ENCODE measurements at regions of chr10 and their contacts with region 1.

Region 1: GRCh38 chr10:61284222-61284890 is 168.8 kb downstream of the TMEM26 start:
- DNase-seq: peak; percentile 64
- ATAC-seq: no peak
- H3K4me3 ChIP-seq: peak overlapping the region; percentile 15 to 30; a peak in 3 of 4 replicates
- H3K27ac ChIP-seq: peak overlapping the region; percentile 48; the same call in 1 of the 2 replicates
- H3K4me1 ChIP-seq: no peaks in the 10 kb centered on the region
- H3K27me3 ChIP-seq: no peaks in the 10 kb centered on the region
- CTCF ChIP-seq: peak; percentile 80; the same call in 1 of the 2 replicates

Region 2: DNA sequence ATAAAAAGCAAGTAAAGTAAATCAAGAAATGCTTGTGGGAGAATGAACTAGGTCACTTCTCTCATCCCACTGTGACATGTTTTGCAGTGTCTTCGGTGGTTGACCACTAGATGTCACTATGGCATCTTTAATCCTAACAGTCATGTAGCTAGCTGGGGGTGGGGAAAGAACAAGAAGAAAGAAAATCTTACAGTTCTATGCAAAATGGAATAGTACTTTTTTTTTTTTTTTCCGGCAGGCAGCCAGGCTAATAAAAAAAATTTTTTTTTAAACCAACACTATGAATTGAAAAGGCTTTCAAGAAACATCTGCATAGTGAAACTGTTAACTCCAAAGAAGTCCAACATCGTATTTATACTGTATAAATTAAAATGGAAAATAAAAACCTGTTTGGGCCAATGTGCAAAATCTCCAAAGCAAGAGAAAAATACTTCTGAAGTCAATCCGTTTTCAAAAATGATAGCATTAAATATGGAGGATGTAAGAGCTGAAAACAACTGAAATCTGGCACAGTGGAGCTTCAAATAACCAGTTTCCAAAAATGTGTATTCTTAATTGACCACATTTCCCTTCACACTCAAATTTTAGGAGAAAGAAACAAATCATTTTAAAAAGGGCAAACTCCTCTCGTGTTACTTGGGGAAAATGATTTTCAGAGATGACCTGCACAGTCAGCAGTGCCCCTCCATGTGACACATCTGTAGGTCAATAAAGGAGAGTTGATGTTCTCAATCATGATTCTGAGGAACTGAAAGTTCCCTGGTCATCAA is 467.5 kb before region 1 on chr10:
- CTCF ChIA-PET with region 1: no interaction called
- POLR2A ChIA-PET with region 1: no interaction called
- in situ Hi-C with region 1: no loop called
- intact Hi-C with region 1: loop called (anchors 1 kb)
- DNase-seq: peak; percentile 72
- ATAC-seq: peak; percentile 90
- H3K4me3 ChIP-seq: no peak overlapping the region
- H3K27ac ChIP-seq: peak overlapping the region; percentile 44; the same call in 1 of the 2 replicates
- H3K4me1 ChIP-seq: peaks cover 3% of the 10 kb centered on the region; the same call in 1 of the 2 replicates
- H3K27me3 ChIP-seq: no peaks in the 10 kb centered on the region
- CTCF ChIP-seq: peak; percentile 80; the same call in 1 of the 2 replicates

Region 3: GRCh38 chr10:61140765-61141392 is 143.5 kb before region 1 on chr10:
- CTCF ChIA-PET with region 1: no interaction called
- POLR2A ChIA-PET with region 1: no interaction called
- in situ Hi-C with region 1: no loop called
- intact Hi-C with region 1: loop called (anchors 2 kb)
- DNase-seq: peak; percentile 67
- ATAC-seq: peak; percentile 88
- H3K4me3 ChIP-seq: no peak overlapping the region
- H3K27ac ChIP-seq: peak overlapping the region; percentile 60; the same call in 1 of the 2 replicates
- H3K4me1 ChIP-seq: peaks cover 6% of the 10 kb centered on the region
- H3K27me3 ChIP-seq: no peaks in the 10 kb centered on the region
- CTCF ChIP-seq: peak; percentile 77

Region 4: GRCh38 chr10:61733358-61733940 is 449.1 kb after region 1 on chr10:
- CTCF ChIA-PET with region 1: interaction called, 4 read pairs
- POLR2A ChIA-PET with region 1: no interaction called
- in situ Hi-C with region 1: no loop called
- intact Hi-C with region 1: loop called (anchors 10 kb)
- DNase-seq: peak; percentile 46
- ATAC-seq: peak; percentile 78
- H3K4me3 ChIP-seq: no peak overlapping the region
- H3K27ac ChIP-seq: peak overlapping the region; percentile 74; the same call in 1 of the 2 replicates
- H3K4me1 ChIP-seq: no peaks in the 10 kb centered on the region
- H3K27me3 ChIP-seq: no peaks in the 10 kb centered on the region
- CTCF ChIP-seq: peak; percentile 80; the same call in 1 of the 2 replicates